ENCODE measurements at regions of chr4 and their contacts with region 1.

Region 1: GRCh38 chr4:83231620-83232076 is 53.0 kb downstream of the COQ2 start:
- DNase-seq: no peak
- ATAC-seq: no peak
- H3K4me3 ChIP-seq: no peak overlapping the region
- H3K27ac ChIP-seq: peak overlapping the region in 1 of 10 donors; percentile 28
- H3K4me1 ChIP-seq: peaks cover 0 to 29% (median 0%) of the 10 kb centered on the region in 9 donors
- H3K27me3 ChIP-seq: no peaks in the 10 kb centered on the region
- CTCF ChIP-seq: no peak

Region 2: GRCh38 chr4:83252782-83253405 is 21.2 kb after region 1 on chr4:
- intact Hi-C with region 1: loop called in 1 of 10 experiments (anchors 1 kb)
- DNase-seq: peak in 1 of 2 donors; percentile 58
- ATAC-seq: peak in 5 of 8 donors; percentile 41 to 66 (median 59)
- H3K4me3 ChIP-seq: no peak overlapping the region
- H3K27ac ChIP-seq: no peak overlapping the region
- H3K4me1 ChIP-seq: peaks cover 0 to 28% (median 2%) of the 10 kb centered on the region in 9 donors
- H3K27me3 ChIP-seq: no peaks in the 10 kb centered on the region
- CTCF ChIP-seq: peak in 8 of 9 donors; percentile 14 to 82 (median 54)

Region 3: DNA sequence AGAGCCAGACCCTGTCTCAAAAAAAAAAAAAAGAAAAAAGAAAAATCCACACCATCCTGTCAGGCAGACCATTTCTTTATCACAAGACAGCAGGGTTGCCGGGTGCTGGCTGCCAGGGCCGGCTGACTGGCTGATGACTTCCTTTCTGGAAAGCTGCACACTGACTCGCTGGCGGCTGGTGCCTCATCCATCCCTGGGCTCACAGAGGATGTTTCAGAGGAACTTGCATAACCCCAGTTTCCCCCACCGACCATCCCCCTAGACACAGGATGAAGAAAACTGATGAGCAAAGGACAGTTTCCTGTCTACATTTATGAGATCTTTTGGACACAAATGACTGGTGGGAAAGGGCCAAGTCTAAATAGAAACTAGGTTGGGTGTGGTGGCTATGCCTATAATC is 88.9 kb after region 1 on chr4:
- intact Hi-C with region 1: no loop called
- DNase-seq: peak; percentile 45
- ATAC-seq: peak; percentile 37 to 81 (median 64)
- H3K4me3 ChIP-seq: no peak overlapping the region
- H3K27ac ChIP-seq: peak overlapping the region in 1 of 10 donors; percentile 77
- H3K4me1 ChIP-seq: peaks cover 0 to 32% (median 0%) of the 10 kb centered on the region in 9 donors
- H3K27me3 ChIP-seq: peaks cover 0 to 12% (median 0%) of the 10 kb centered on the region in 7 donors
- CTCF ChIP-seq: no peak

Region 4: DNA sequence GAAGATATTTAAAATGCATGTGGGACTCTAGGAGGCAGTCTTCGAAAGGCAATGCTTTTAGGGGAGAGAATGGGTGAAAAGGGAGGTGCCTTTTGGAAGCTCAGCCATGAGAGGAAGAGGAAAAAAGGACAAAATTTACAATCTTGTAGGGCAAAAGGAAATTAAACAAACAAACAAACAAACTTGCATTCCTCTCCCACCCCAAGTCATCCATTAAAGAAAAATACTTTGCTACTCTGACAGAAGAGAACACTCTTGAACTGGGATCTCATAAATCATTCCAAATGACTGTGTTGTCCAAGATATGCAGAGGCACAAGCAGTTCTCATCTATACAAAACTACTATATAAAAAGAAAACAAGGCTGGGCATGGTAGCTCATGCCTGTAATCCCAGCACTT is 177.3 kb after region 1 on chr4:
- intact Hi-C with region 1: no loop called
- DNase-seq: no peak
- ATAC-seq: no peak
- H3K4me3 ChIP-seq: no peak overlapping the region
- H3K27ac ChIP-seq: no peak overlapping the region
- H3K4me1 ChIP-seq: no peaks in the 10 kb centered on the region
- H3K27me3 ChIP-seq: no peaks in the 10 kb centered on the region
- CTCF ChIP-seq: no peak

Region 5: DNA sequence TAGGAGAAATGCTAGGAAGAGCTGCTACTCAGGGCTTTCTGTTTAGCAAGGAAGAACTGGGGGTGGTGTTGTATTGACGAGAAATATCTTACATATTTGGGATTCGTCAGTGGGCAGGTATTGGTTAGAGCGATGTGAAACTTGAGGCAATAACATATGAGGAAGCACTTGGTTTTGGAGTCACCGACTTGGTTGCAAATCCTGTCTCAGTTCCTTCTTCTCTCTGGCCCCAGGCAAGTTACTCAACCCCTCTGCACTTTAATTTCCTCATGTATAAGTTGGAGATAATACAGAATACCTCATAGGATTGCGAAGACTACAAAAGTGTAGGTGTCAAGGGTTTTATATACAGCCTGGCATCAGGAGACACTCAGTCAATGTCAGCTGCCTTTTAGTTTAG is 338.3 kb after region 1 on chr4:
- intact Hi-C with region 1: loop called in 1 of 10 experiments (anchors 5 kb)
- DNase-seq: no peak
- ATAC-seq: peak in 4 of 8 donors; percentile 25 to 46 (median 39)
- H3K4me3 ChIP-seq: peak overlapping the region in 1 of 10 donors; percentile 12
- H3K27ac ChIP-seq: peak overlapping the region in 2 of 10 donors; percentile 33 to 60
- H3K4me1 ChIP-seq: peaks cover 0 to 33% (median 3%) of the 10 kb centered on the region in 9 donors
- H3K27me3 ChIP-seq: no peaks in the 10 kb centered on the region
- CTCF ChIP-seq: no peak